ENCODE measurements at regions of chr6 and their contacts with region 1.

Region 1: DNA sequence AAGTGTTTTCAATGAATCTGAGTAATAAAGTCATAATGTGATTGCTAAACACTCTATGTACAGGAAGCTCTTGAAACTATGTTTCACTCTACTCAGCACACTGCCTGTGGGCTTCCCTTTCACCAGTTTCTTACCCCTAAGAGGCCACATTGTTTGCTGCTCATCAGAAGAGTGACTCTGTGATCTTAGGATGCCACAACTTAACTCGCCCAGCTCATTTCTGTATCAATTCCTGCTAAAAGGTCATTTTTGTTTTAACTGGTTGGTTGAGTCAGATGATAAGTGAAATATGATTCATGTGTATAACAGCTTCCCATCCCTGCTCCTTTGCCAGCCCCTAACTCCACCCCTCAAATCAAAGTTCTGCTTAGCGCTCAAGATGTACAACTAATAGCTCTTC is 9.8 kb upstream of the NDUFAF4 start:
- DNase-seq: no peak
- ATAC-seq: no peak
- H3K4me3 ChIP-seq: no peak overlapping the region
- H3K27ac ChIP-seq: no peak overlapping the region
- H3K4me1 ChIP-seq: no peaks in the 10 kb centered on the region
- H3K27me3 ChIP-seq: no peaks in the 10 kb centered on the region
- CTCF ChIP-seq: no peak

Region 2: DNA sequence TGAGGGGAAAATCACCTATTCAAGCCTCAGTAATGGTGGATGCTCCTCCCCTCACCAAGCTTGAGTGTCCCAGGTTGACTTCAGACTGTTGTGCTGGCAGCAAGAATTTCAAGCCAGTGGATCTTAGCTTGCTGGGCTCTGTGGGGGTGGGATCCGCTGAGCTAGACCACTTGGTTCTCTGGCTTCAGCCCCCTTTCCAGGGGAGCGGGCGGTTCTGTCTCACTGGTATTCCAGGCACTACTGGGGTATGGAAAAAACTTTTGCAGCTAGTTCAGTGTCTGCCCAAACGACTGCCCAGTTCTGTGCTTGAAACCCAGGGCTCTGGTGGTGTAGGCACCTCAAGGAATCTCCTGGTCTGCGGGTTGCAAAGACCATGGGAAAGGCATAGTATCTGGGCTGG is 428.8 kb before region 1 on chr6:
- intact Hi-C with region 1: no loop called
- DNase-seq: no peak
- ATAC-seq: no peak
- H3K4me3 ChIP-seq: no peak overlapping the region
- H3K27ac ChIP-seq: no peak overlapping the region
- H3K4me1 ChIP-seq: no peaks in the 10 kb centered on the region
- H3K27me3 ChIP-seq: no peaks in the 10 kb centered on the region
- CTCF ChIP-seq: no peak

Region 3: DNA sequence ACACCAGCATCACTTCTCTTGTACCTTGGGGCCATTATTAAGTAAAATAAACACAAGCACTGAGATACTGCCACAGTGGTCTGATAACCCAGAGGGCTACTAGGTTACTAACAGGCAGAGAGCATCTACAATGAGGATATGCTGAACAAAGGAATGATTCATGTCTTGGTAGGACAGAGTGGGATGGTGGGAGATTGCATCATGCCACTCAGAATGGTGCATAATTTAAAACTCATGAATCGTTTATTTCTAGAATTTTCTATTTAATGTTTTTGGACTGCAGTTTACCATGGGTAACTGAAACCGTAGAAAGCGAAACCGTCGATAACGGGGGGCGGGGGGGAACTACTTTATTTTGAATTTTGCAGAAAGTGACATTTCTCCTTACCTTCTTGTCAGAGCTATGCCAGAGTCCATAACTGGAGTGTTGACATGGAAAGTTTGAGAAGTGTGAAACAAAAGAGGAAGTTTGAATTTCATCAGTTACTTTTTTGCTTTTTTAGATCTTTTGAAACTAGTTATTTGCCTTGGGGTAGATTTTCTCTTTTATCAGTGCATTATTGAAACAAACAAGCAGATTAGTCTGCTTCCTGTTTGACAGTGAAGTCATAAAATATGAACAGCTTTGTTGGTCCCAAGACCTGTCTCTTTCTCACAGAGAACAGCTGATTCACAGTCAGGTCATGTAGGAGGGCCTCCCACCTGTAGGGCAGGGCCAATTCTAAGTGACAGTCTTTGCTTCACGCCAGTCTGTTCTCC is 141.9 kb after region 1 on chr6:
- intact Hi-C with region 1: loop called in 2 of 3 experiments (anchors 10 kb)
- DNase-seq: no peak
- ATAC-seq: peak in 2 of 4 donors; percentile 28 to 35
- H3K4me3 ChIP-seq: no peak overlapping the region
- H3K27ac ChIP-seq: no peak overlapping the region
- H3K4me1 ChIP-seq: no peaks in the 10 kb centered on the region
- H3K27me3 ChIP-seq: no peaks in the 10 kb centered on the region
- CTCF ChIP-seq: no peak

Region 4: GRCh38 chr6:97059473-97059872 is 152.0 kb after region 1 on chr6:
- intact Hi-C with region 1: loop called in 1 of 3 experiments (anchors 10 kb)
- DNase-seq: no peak
- ATAC-seq: peak in 3 of 4 donors; percentile 46 to 69 (median 53)
- H3K4me3 ChIP-seq: no peak overlapping the region
- H3K27ac ChIP-seq: no peak overlapping the region
- H3K4me1 ChIP-seq: no peaks in the 10 kb centered on the region
- H3K27me3 ChIP-seq: no peaks in the 10 kb centered on the region
- CTCF ChIP-seq: peak in 3 of 4 donors; percentile 22 to 41 (median 27)